ENCODE measurements at regions of chr15 and their contacts with region 1.

Region 1: DNA sequence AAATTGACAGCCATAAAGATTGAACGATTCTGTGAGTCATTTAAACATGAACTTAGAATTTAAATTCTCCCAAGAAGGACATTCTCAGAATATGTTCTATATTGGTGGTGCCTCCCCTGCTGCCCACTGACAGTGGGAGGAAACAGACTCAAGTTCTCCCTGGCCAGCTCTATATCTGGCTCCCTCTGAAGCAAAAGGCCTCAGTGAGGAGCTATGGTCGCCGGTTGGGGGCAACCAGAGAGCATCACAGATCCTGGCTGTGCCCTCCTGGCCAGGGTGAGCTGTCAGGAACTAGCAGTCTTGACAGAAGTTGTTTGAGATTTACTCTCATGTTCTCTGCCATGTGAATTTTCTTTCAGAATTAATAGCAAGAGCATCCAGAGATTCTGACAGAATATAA is 285.5 kb downstream of the NTRK3 start:
- DNase-seq: no peak
- H3K4me3 ChIP-seq: no peak overlapping the region
- H3K27ac ChIP-seq: no peak overlapping the region
- H3K4me1 ChIP-seq: no peaks in the 10 kb centered on the region
- H3K27me3 ChIP-seq: no peaks in the 10 kb centered on the region; a peak in 1 of 7 replicates
- CTCF ChIP-seq: no peak
- EP300 ChIP-seq: no peak
- POLR2A ChIP-seq: no peak
- RAD21 ChIP-seq: no peak

Region 2: DNA sequence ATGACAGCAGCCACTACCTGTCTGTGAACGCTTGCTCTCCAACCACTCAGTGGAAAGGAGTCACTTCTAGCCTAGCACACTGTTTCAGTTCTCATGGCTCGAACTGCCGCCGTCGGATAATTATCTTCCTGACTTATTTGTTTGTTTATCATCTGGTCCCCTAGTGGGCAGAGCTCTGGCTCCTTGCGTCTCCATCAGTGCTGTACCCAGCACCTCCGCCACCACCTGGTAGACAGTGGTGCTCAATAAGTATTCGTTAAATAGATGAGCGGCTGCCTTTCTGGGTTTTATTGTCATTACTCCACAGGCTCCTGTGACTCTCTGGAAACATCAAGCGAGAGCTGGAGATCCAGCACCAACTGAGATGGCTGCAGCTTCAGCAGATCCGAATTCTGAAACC is 12.0 kb before region 1 on chr15:
- CTCF ChIA-PET with region 1: interaction called, 19 read pairs
- POLR2A ChIA-PET with region 1: no interaction called
- DNase-seq: no peak
- H3K4me3 ChIP-seq: no peak overlapping the region
- H3K27ac ChIP-seq: no peak overlapping the region
- H3K4me1 ChIP-seq: no peaks in the 10 kb centered on the region
- H3K27me3 ChIP-seq: no peaks in the 10 kb centered on the region
- CTCF ChIP-seq: no peak
- EP300 ChIP-seq: no peak
- POLR2A ChIP-seq: no peak
- RAD21 ChIP-seq: no peak

Region 3: GRCh38 chr15:88049506-88049905 is 78.4 kb after region 1 on chr15:
- CTCF ChIA-PET with region 1: no interaction called
- POLR2A ChIA-PET with region 1: no interaction called
- DNase-seq: no peak
- H3K4me3 ChIP-seq: no peak overlapping the region
- H3K27ac ChIP-seq: no peak overlapping the region
- H3K4me1 ChIP-seq: peaks cover 0 to 2% (median 0%) of the 10 kb centered on the region in 4 experiments; a peak in 3 of 7 replicates
- H3K27me3 ChIP-seq: no peaks in the 10 kb centered on the region
- CTCF ChIP-seq: no peak
- EP300 ChIP-seq: no peak
- POLR2A ChIP-seq: no peak
- RAD21 ChIP-seq: no peak

Measured in H1 (cell line).